A673 (cell line): ENCODE measurements at regions of chr17 and their contacts with region 1.

Region 1: DNA sequence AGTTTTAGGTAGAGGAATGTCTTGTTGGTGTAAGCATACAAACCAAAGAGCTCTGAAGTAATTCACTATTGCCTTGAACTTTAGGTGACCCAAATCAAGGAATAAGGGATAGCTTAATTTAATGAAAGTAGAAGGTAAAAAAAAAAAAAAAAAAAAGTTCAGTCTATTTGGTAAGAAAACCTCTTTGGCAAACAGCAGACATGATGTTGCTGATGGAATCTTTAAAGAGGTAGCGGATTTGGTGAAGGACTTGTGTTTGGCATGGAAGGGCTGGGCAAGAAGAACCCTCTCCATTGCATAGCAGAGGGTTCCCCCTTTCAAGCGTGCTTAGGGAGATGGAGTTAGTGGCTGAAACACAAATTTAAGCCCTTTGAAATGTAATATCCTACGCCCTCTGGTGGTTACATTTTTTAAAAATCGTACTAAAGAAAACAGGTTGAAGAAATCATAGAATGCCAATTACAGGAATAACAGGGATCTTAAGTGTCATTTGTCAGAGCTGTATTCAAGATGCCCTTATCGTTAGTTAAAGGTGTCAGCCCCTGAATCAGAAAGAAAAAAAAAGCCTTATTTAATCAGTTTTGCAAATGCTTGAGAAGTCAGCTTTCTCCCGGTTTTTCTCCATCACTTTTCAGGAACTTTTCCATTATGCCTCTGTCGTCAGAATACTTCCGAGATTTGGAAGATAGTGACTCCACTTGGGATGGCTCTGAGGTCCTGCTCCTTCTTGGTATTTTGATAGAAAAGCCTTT is 383.1 kb downstream of the KCNJ2 start:
- DNase-seq: peak; percentile 58
- H3K4me3 ChIP-seq: no peak overlapping the region
- H3K27ac ChIP-seq: no peak overlapping the region
- H3K4me1 ChIP-seq: no peaks in the 10 kb centered on the region
- H3K27me3 ChIP-seq: no peaks in the 10 kb centered on the region
- CTCF ChIP-seq: peak; percentile 62

Region 2: GRCh38 chr17:69567130-69567529 is 985.3 kb before region 1 on chr17:
- CTCF ChIA-PET with region 1: no interaction called
- POLR2A ChIA-PET with region 1: no interaction called
- intact Hi-C with region 1: loop called (anchors 5 kb)
- DNase-seq: no peak
- H3K4me3 ChIP-seq: no peak overlapping the region
- H3K27ac ChIP-seq: no peak overlapping the region
- H3K4me1 ChIP-seq: no peaks in the 10 kb centered on the region
- H3K27me3 ChIP-seq: no peaks in the 10 kb centered on the region
- CTCF ChIP-seq: no peak

Region 3: GRCh38 chr17:70168977-70169708 is 383.3 kb before region 1 on chr17 and contains the start of gene KCNJ2:
- CTCF ChIA-PET with region 1: no interaction called
- POLR2A ChIA-PET with region 1: no interaction called
- intact Hi-C with region 1: loop called (anchors 10 kb)
- DNase-seq: peak; percentile 86
- H3K4me3 ChIP-seq: peak within 1 kb of the TSS; percentile 36
- H3K27ac ChIP-seq: no peak within 1 kb of the TSS
- H3K4me1 ChIP-seq: peaks cover 13% of the 10 kb centered on the region
- H3K27me3 ChIP-seq: peaks cover 91% of the 10 kb centered on the region
- CTCF ChIP-seq: no peak
- total RNA-seq, gene KCNJ2: not detected in 2 replicates

Region 4: GRCh38 chr17:70709596-70709995 is 157.2 kb after region 1 on chr17:
- CTCF ChIA-PET with region 1: no interaction called
- POLR2A ChIA-PET with region 1: no interaction called
- intact Hi-C with region 1: no loop called
- DNase-seq: no peak
- H3K4me3 ChIP-seq: no peak overlapping the region
- H3K27ac ChIP-seq: no peak overlapping the region
- H3K4me1 ChIP-seq: no peaks in the 10 kb centered on the region
- H3K27me3 ChIP-seq: no peaks in the 10 kb centered on the region
- CTCF ChIP-seq: no peak

Region 5: GRCh38 chr17:70739065-70739464 is 186.7 kb after region 1 on chr17:
- CTCF ChIA-PET with region 1: no interaction called
- POLR2A ChIA-PET with region 1: no interaction called
- intact Hi-C with region 1: no loop called
- DNase-seq: no peak
- H3K4me3 ChIP-seq: no peak overlapping the region
- H3K27ac ChIP-seq: no peak overlapping the region
- H3K4me1 ChIP-seq: no peaks in the 10 kb centered on the region
- H3K27me3 ChIP-seq: peaks cover 9% of the 10 kb centered on the region
- CTCF ChIP-seq: no peak